AG04449 (cell line): ENCODE measurements at regions of chr11 and their contacts with region 1.

Region 1: GRCh38 chr11:66282468-66283386 is 4.8 kb downstream of the CNIH2 start:
- DNase-seq: peak; percentile 42
- H3K4me3 ChIP-seq: no peak overlapping the region
- CTCF ChIP-seq: peak; percentile 98

Region 2: DNA sequence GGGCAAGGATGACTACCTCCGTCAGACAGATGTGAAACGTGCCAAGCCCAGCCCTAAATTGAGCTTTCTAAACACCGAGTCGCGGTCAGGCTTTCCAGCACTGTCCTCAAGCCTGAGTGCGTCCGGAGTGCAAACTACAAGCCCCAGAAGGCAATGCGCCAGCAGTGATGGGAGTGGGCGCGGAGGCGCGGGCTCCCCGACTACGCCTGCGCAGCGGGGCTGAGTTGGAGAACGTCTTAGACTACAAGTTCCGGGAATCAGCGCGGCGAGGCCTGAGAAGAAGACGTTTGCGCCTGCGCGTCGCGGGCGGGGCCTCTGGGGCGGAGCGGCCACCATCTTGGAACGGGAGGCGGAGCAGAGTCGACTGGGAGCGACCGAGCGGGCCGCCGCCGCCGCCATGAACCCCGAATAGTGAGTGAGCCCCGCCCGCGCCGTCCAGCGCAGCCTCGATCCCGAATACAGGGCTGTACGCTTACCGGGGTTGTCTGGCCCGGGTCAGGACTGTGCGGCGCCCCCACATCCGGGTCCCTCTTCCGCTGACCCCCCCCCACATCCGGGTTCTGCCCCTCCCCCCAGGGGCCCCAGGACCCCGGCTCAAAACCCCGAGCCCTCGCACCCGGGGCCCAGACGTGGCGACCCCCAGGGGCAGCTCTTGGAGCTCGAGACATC is 14.3 kb before region 1 on chr11 and contains the start of gene RAB1B:
- CTCF ChIA-PET with region 1: interaction called, 144 read pairs
- POLR2A ChIA-PET with region 1: interaction called, 5 read pairs
- DNase-seq: peak; percentile 92
- H3K4me3 ChIP-seq: peak within 1 kb of the TSS; percentile 96
- CTCF ChIP-seq: no peak

Region 3: DNA sequence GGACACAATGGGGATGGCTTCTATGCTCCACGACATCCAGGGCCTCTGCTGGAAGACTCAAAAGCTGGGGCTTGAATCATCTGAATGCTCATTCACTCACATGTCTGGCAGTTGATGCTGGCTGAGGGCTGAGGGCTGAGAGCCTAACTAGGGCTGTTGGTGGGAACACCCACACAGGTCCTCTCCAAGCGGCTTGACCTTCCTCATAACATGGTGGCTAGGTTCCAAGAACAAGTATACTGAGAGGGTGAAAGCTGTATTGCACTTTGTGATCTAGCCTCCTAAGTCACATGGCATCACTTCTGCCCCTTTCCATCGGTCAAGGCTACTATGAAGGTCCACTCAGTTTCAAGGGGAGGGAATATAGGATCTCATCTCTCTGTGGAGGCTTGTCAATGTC is 16.5 kb after region 1 on chr11:
- CTCF ChIA-PET with region 1: interaction called, 13 read pairs
- POLR2A ChIA-PET with region 1: no interaction called
- DNase-seq: no peak
- H3K4me3 ChIP-seq: no peak overlapping the region
- CTCF ChIP-seq: no peak

Region 4: GRCh38 chr11:66344550-66345315 is 62.0 kb after region 1 on chr11 and contains the start of gene BRMS1:
- CTCF ChIA-PET with region 1: interaction called, 12 read pairs
- POLR2A ChIA-PET with region 1: no interaction called
- DNase-seq: peak; percentile 79
- H3K4me3 ChIP-seq: peak within 1 kb of the TSS; percentile 99
- CTCF ChIP-seq: no peak